WTC11 (cell line): ENCODE measurements at regions of chr19 and their contacts with region 1.

Region 1: DNA sequence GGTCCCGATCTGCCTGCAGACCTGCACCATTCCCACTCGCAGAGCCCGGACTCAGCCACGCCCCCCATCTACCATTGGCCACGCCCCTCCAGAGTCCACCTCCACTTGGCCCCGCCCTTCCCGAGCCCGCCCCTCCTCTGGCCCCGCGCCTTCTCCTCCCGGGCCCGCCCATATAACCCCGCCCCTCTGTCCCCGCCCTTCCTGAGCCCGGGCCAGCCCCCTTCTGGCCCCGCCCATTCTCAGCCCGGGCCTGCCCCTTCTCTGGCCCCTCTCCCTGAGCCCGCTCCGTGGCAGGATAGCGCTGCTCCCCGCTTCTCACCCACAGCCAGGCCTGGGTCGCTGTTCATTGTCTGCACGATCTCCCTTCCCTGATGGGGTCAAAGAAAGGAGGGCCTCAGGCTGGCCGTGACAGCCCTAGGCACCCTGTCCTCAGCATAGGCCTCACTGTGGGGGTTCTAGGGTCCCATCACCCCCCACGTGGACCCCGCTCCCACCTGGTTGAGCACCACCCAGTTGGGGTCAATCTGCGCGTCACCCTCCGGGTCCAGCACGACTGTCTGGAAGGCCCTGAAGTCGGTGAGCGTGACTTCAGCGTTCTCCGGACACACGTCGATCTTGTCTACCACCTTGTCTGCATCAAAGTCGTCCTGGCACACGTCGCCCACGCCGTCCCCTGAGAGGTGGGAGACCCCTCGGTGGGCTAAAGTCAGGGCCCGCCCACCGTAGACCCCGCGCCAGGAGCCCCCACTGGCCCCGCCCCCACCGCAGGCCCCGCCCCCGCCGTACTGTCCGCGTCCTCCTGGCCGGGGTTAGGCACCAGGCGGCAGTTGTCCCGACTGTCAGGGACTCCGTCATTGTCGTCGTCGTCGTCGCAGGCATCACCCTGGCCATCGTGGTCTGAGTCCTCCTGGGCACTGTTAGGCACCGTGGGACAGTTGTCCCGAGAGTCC is 5.7 kb downstream of the COMP start:
- DNase-seq: peak; percentile 98
- ATAC-seq: peak; percentile 78
- H3K4me3 Mint-ChIP-seq: peak overlapping the region; percentile 56
- H3K27ac Mint-ChIP-seq: no peak overlapping the region
- H3K4me1 Mint-ChIP-seq: peaks cover 19% of the 10 kb centered on the region
- H3K27me3 Mint-ChIP-seq: peaks cover 100% of the 10 kb centered on the region
- CTCF ChIP-seq: no peak

Region 2: DNA sequence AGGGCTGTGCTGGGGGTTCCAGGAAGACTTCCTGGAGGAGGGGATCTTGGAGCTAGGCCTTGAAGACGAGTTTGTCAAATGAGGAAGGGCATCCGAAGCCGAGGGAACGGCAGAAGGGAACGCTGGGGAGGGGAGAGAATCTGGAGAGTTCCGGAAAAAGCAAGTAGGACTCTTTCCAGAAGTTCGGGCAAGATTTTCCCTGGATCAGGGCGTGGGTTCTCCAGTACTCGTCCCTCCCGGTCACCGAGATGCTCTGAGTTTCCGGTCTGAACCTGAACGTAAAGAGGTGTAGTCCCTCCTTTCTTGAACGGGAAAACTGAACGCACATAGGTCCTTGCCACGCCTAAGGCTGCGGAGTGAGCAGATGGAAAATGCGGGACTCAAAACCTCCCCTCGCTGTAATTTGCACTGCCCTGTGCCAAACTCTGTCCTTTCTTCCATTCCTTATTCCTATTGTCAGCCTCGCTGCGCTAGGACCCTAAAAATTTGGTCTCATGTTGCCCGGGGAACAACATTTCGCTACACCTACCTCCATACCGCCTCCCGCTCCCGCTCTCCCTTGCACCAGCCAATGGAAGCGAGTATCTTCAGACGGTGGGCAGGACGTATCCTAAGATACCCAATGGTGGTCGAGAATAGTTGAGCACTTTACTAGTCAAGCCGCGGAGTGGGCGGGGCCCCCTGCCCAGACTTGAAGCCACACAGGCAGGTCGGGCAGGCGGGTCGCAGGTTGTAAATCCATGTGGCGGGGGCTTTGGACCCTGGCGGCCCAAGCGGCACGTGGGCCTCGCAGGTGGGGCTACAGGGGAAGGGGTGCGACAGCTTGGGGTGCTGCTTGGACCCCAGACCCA is 1448.4 kb before region 1 on chr19 and contains the start of gene GTPBP3:
- CTCF ChIA-PET with region 1: no interaction called
- POLR2A ChIA-PET with region 1: interaction called, 10 read pairs
- DNase-seq: peak; percentile 98
- ATAC-seq: peak; percentile 67
- H3K4me3 Mint-ChIP-seq: peak within 1 kb of the TSS; percentile 99
- H3K27ac Mint-ChIP-seq: peak within 1 kb of the TSS; percentile 99
- H3K4me1 Mint-ChIP-seq: peaks cover 48% of the 10 kb centered on the region
- H3K27me3 Mint-ChIP-seq: peaks cover 2% of the 10 kb centered on the region; the same call in 1 of the 2 replicates
- CTCF ChIP-seq: no peak
- total RNA-seq, gene GTPBP3: 79.1 to 93.0 TPM (median 80.8 TPM) in 3 replicates

Region 3: GRCh38 chr19:18802354-18802753 is 16.9 kb after region 1 on chr19:
- CTCF ChIA-PET with region 1: no interaction called
- POLR2A ChIA-PET with region 1: no interaction called
- DNase-seq: peak; percentile 60
- ATAC-seq: peak; percentile 97
- H3K4me3 Mint-ChIP-seq: peak overlapping the region; percentile 27; the same call in 1 of the 2 replicates
- H3K27ac Mint-ChIP-seq: peak overlapping the region; percentile 49; the same call in 1 of the 2 replicates
- H3K4me1 Mint-ChIP-seq: no peaks in the 10 kb centered on the region
- H3K27me3 Mint-ChIP-seq: peaks cover 18% of the 10 kb centered on the region
- CTCF ChIP-seq: no peak

Region 4: GRCh38 chr19:18831524-18832305 is 46.3 kb after region 1 on chr19 and contains the start of gene UPF1:
- CTCF ChIA-PET with region 1: interaction called, 10 read pairs
- POLR2A ChIA-PET with region 1: no interaction called
- DNase-seq: peak; percentile 98
- ATAC-seq: peak; percentile 72
- H3K4me3 Mint-ChIP-seq: peak within 1 kb of the TSS; percentile 94
- H3K27ac Mint-ChIP-seq: peak within 1 kb of the TSS; percentile 84
- H3K4me1 Mint-ChIP-seq: peaks cover 24% of the 10 kb centered on the region
- H3K27me3 Mint-ChIP-seq: peaks cover 33% of the 10 kb centered on the region
- CTCF ChIP-seq: no peak
- total RNA-seq, gene UPF1: 77.3 to 82.5 TPM (median 81.9 TPM) in 3 replicates